Colonic mucosa (tissue), 4 donors: ENCODE measurements at regions of chr1 and their contacts with region 1.

Region 1: GRCh38 chr1:166910396-166910994 is 34.4 kb upstream of the TADA1 start:
- DNase-seq: peak; percentile 82
- H3K4me3 ChIP-seq: no peak overlapping the region
- H3K27ac ChIP-seq: no peak overlapping the region
- H3K4me1 ChIP-seq: no peaks in the 10 kb centered on the region
- H3K27me3 ChIP-seq: no peaks in the 10 kb centered on the region
- CTCF ChIP-seq: peak; percentile 67

Region 2: GRCh38 chr1:166884040-166884642 is 26.4 kb before region 1 on chr1:
- intact Hi-C with region 1: loop called (anchors 2 kb)
- DNase-seq: peak; percentile 58
- H3K4me3 ChIP-seq: peak overlapping the region; percentile 22
- H3K27ac ChIP-seq: no peak overlapping the region
- H3K4me1 ChIP-seq: peaks cover 7% of the 10 kb centered on the region
- H3K27me3 ChIP-seq: peaks cover 8% of the 10 kb centered on the region
- CTCF ChIP-seq: peak; percentile 72

Region 3: DNA sequence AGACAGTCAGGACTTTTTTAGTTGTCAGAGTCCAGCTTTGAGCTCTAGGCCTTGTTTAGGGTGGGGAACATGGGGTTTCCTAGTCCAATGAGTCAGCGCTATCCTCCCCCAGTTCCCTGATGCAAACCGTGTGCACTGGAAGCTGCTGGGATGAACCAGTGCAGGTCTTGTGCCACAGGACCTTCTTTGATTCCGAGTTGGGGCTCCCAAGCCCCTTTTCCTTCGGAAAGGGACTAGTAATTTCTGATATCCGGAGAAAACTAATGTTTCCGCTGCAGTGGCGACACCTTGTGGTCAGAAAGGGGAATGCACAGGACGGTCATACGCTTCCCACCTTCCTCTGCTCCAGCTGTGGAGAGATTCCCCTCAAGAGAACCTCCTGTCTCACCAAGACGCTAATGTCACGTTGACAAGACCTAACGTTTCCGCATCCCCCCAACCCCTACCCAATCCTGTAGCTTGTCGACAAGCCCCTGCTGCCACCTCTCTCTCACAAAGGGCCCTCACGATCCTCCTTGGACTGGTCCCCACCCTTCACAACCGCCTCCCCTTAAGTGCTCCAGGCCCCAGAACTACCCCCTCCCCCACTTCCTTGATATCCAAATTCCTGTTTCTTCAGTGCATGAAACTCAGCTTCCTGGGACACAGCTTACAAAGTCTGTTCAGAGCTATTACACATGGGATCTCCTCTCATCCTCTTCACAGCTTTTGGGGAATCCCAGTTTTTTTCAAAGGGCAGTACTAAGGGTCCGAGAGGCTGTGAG is 148.7 kb after region 1 on chr1:
- intact Hi-C with region 1: loop called (anchors 5 kb)
- DNase-seq: peak; percentile 78
- H3K4me3 ChIP-seq: no peak overlapping the region
- H3K27ac ChIP-seq: no peak overlapping the region
- H3K4me1 ChIP-seq: no peaks in the 10 kb centered on the region
- H3K27me3 ChIP-seq: no peaks in the 10 kb centered on the region
- CTCF ChIP-seq: peak; percentile 96

Region 4: GRCh38 chr1:167121375-167122120 is 211.1 kb after region 1 on chr1:
- intact Hi-C with region 1: loop called (anchors 10 kb)
- DNase-seq: peak; percentile 85
- H3K4me3 ChIP-seq: peak overlapping the region; percentile 32
- H3K27ac ChIP-seq: peak overlapping the region; percentile 64
- H3K4me1 ChIP-seq: no peaks in the 10 kb centered on the region
- H3K27me3 ChIP-seq: no peaks in the 10 kb centered on the region
- CTCF ChIP-seq: no peak